Endothelial cell of umbilical vein (primary cell): ENCODE measurements at regions of chr15 and their contacts with region 1.

Region 1: DNA sequence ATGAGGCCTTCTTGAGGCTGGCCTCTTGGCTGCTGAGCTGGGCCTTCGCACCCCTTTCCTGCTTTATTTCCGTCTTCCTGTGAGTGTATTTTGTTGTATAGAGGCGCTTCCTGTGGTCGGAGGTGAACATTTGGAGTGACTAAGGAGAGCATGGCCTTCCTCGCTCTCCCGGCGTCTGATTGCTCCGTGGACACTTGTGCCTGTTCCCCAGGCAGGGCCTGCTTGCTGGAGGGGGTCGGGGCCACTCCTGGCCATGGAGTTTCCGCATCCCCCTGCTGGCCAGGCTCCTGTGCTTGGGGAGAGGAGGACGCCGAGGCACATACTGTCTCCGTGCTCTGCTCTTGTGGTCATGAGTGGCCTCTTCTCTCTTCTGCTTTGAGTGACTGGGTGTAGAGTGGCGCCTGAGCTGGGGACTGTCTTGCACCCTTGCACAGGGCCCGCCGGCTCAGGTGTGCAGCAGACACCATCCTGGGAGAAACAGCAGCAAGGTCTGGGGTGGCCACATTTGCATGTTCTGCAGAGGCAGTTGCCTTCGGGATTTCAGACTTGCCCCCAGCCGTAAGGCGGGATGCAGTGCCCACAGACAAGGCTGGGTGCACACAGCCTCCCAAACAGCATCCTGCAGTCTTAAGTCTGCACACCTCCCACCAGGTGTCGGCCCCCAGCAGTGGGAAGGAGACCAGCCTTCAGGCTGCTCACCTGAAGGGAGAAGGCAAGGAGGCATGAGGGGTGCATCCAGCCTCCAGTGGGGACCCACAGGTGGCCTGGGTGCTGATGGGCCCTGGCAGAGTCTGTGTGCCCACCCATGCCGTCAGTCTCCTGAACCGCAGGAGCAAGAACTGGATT is 16.4 kb downstream of the KLF13 start:
- DNase-seq: peak; percentile 82
- H3K4me3 ChIP-seq: no peak overlapping the region
- H3K27ac ChIP-seq: peak overlapping the region; percentile 28
- H3K4me1 ChIP-seq: peaks cover 21% of the 10 kb centered on the region
- H3K27me3 ChIP-seq: no peaks in the 10 kb centered on the region
- CTCF ChIP-seq: peak in 1 of 2 donors; percentile 55
- POLR2A ChIP-seq: no peak

Region 2: GRCh38 chr15:31352911-31353811 is 10.2 kb after region 1 on chr15:
- CTCF ChIA-PET with region 1: interaction called, 5 read pairs
- POLR2A ChIA-PET with region 1: interaction called, 3 read pairs
- dilution Hi-C with region 1: no loop called
- intact Hi-C with region 1: loop called (anchors 1 kb)
- DNase-seq: peak; percentile 90
- H3K4me3 ChIP-seq: no peak overlapping the region
- H3K27ac ChIP-seq: peak overlapping the region; percentile 51
- H3K4me1 ChIP-seq: peaks cover 13% of the 10 kb centered on the region
- H3K27me3 ChIP-seq: no peaks in the 10 kb centered on the region
- CTCF ChIP-seq: no peak
- POLR2A ChIP-seq: no peak

Region 3: DNA sequence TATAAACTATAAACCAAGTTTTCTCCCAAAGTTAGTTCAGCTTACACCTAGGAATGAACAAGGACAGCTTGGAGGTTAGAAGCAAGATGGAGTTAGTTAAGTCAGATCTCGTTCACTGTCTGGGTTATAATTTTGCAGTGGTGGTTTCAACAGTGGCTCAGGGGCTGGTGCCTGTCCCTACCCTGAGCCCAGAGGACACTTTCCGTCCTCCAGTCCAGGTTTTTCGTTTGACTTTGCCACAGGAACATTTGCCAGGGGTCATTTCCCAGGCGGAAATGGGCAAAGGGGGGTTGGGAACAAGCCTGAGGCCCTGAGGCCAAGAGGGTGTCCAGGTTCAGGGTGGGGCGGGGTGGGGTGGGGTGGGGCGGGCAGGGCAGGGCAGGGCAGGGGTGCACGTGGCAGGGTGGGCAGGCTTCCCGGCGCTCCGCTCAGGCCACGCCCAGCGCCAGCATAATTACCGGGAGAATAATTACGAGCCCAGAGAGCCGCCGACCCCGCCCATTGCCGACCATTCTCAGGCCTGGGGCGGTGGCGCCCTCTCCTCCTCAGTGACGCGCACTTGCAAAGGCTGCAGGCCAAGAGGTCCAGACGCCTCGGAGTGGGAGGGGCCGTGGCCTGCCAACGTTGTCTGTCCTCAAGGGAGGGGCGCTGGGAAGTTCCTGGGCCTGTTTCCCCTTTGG is 54.0 kb after region 1 on chr15:
- CTCF ChIA-PET with region 1: interaction called, 6 read pairs
- POLR2A ChIA-PET with region 1: no interaction called
- dilution Hi-C with region 1: no loop called
- intact Hi-C with region 1: loop called (anchors 1 kb)
- DNase-seq: peak; percentile 67
- H3K4me3 ChIP-seq: no peak overlapping the region
- H3K27ac ChIP-seq: peak overlapping the region; percentile 38
- H3K4me1 ChIP-seq: peaks cover 20% of the 10 kb centered on the region
- H3K27me3 ChIP-seq: no peaks in the 10 kb centered on the region
- CTCF ChIP-seq: no peak
- POLR2A ChIP-seq: no peak